Activated B cell treated with CpG ODN at 0.5 μM for 24 hours (primary cell): ENCODE measurements at regions of chr7 and their contacts with region 1.

Region 1: GRCh38 chr7:130069978-130070860 is at the start of gene KLHDC10:
- DNase-seq: peak; percentile 83
- ATAC-seq: peak; percentile 92
- H3K4me3 Mint-ChIP-seq: peak within 1 kb of the TSS; percentile 93
- H3K27ac Mint-ChIP-seq: peak within 1 kb of the TSS; percentile 90
- H3K4me1 Mint-ChIP-seq: peaks cover 44% of the 10 kb centered on the region
- H3K27me3 Mint-ChIP-seq: no peaks in the 10 kb centered on the region
- CTCF ChIP-seq: no peak
- total RNA-seq, gene KLHDC10: 17.2 and 21.0 TPM in 2 replicates

Region 2: DNA sequence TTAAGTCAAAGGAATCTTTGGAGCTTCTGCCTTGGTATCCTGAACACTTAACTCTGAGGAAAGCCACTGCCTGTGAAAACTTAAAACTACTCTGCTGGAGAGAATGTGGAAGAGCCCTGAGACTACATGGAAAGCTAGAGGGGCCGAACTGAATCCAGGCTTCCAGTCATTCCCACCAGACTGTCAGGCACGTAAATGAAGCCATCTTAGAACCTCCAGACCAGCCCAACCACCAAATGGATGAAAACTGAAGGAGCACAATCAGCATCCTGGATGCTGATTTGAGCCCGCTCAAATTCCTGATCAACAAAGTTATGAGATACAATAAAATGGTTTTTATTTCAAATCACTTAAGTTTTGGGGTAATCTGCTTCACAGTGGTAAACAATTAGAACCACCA is 1046.1 kb before region 1 on chr7:
- CTCF ChIA-PET with region 1: no interaction called
- POLR2A ChIA-PET with region 1: no interaction called
- intact Hi-C with region 1: no loop called
- DNase-seq: no peak
- ATAC-seq: no peak
- H3K4me3 Mint-ChIP-seq: no peak overlapping the region
- H3K27ac Mint-ChIP-seq: no peak overlapping the region
- H3K4me1 Mint-ChIP-seq: peaks cover 36% of the 10 kb centered on the region
- H3K27me3 Mint-ChIP-seq: no peaks in the 10 kb centered on the region
- CTCF ChIP-seq: no peak

Region 3: DNA sequence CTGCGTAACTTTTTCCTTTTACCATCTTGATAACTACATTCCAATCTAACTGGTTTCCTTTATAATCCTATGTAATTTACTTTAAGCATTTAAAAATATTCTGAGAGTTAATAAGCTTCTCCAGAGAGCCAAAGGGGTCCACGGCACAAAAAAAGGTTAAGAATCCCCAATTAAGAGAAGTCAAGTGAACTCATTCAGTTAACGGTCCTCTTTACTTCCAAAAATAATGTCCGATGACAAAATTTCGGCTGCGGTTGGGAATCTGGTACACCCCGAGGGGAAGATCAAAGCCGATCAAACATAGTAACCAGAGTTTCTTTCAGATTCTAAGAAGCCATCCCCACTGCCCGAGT is 19.5 kb before region 1 on chr7:
- CTCF ChIA-PET with region 1: interaction called, 3 read pairs
- POLR2A ChIA-PET with region 1: interaction called, 11 read pairs
- intact Hi-C with region 1: loop called (anchors 1 kb)
- DNase-seq: no peak
- ATAC-seq: no peak
- H3K4me3 Mint-ChIP-seq: peak overlapping the region; percentile 98
- H3K27ac Mint-ChIP-seq: peak overlapping the region; percentile 93
- H3K4me1 Mint-ChIP-seq: peaks cover 12% of the 10 kb centered on the region
- H3K27me3 Mint-ChIP-seq: no peaks in the 10 kb centered on the region
- CTCF ChIP-seq: no peak

Region 4: DNA sequence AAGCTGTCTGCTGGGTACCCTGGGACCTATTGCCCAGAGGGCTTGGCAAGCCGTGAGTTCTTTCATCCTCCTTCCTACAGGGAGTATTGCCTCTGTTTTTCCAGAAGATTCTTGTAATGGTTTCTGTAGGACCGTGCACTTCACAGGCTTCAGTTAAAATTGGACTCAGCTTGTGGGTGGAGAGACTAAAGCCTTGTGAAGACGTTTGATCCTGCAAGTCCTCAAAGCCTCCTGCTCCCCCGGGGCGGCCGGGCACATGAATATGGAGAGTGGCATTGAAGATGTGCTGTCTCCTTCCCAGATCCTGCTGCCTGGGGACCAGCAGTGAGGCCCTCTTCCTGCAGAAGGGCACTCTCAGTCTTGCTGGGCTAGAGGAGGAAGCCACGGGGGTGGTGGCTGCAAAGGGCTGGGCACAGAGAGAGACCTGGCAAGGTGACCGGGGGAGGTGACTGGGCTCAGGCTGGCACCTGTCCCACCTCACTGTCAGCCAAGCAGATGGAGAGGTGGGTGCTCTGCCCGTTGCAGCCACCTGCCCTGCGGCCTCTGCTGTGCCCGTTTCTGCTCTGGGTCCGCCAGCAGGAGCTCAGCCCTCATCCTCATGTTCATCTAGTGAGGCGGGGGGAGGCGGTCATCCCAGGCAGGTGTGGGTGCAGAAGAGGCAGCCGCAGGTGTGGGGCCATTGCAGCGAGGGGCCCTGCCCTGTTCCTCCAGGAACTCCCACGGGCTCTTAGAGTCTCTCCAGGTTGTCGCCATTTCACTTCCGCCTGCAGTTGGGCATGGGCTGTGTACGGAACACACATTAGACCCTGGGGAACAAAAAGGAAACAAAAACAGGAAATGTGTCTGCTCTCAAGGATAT is 79.3 kb after region 1 on chr7:
- CTCF ChIA-PET with region 1: no interaction called
- POLR2A ChIA-PET with region 1: no interaction called
- intact Hi-C with region 1: loop called (anchors 1 kb)
- DNase-seq: no peak
- ATAC-seq: peak; percentile 80
- H3K4me3 Mint-ChIP-seq: peak overlapping the region; percentile 46
- H3K27ac Mint-ChIP-seq: peak overlapping the region; percentile 77
- H3K4me1 Mint-ChIP-seq: peaks cover 51% of the 10 kb centered on the region
- H3K27me3 Mint-ChIP-seq: no peaks in the 10 kb centered on the region
- CTCF ChIP-seq: no peak

Region 5: GRCh38 chr7:130486114-130486958 is 416.1 kb after region 1 on chr7:
- CTCF ChIA-PET with region 1: interaction called, 7 read pairs
- POLR2A ChIA-PET with region 1: no interaction called
- intact Hi-C with region 1: loop called (anchors 1 kb)
- DNase-seq: peak; percentile 50
- ATAC-seq: peak; percentile 87
- H3K4me3 Mint-ChIP-seq: peak overlapping the region; percentile 87
- H3K27ac Mint-ChIP-seq: peak overlapping the region; percentile 33
- H3K4me1 Mint-ChIP-seq: peaks cover 23% of the 10 kb centered on the region
- H3K27me3 Mint-ChIP-seq: peaks cover 32% of the 10 kb centered on the region
- CTCF ChIP-seq: peak; percentile 60

Region 6: GRCh38 chr7:130695840-130696239 is 625.6 kb after region 1 on chr7:
- CTCF ChIA-PET with region 1: no interaction called
- POLR2A ChIA-PET with region 1: no interaction called
- intact Hi-C with region 1: loop called (anchors 1 kb)
- DNase-seq: no peak
- ATAC-seq: no peak
- H3K4me3 Mint-ChIP-seq: no peak overlapping the region
- H3K27ac Mint-ChIP-seq: no peak overlapping the region
- H3K4me1 Mint-ChIP-seq: no peaks in the 10 kb centered on the region
- H3K27me3 Mint-ChIP-seq: peaks cover 8% of the 10 kb centered on the region
- CTCF ChIP-seq: no peak

Region 7: GRCh38 chr7:131327626-131328376 is 1257.6 kb after region 1 on chr7 and contains the start of gene MKLN1:
- CTCF ChIA-PET with region 1: no interaction called
- POLR2A ChIA-PET with region 1: no interaction called
- intact Hi-C with region 1: loop called (anchors 5 kb)
- DNase-seq: peak; percentile 85
- ATAC-seq: peak; percentile 96
- H3K4me3 Mint-ChIP-seq: peak within 1 kb of the TSS; percentile 98
- H3K27ac Mint-ChIP-seq: peak within 1 kb of the TSS; percentile 95
- H3K4me1 Mint-ChIP-seq: peaks cover 57% of the 10 kb centered on the region
- H3K27me3 Mint-ChIP-seq: no peaks in the 10 kb centered on the region
- CTCF ChIP-seq: no peak
- total RNA-seq, gene MKLN1: 48.9 and 64.6 TPM in 2 replicates